ENCODE measurements at regions of chr19 and their contacts with region 1.

Region 1: GRCh38 chr19:31548941-31549340 is 199.7 kb upstream of the TSHZ3 start:
- DNase-seq: peak; percentile 44
- ATAC-seq: peak; percentile 65
- H3K4me3 ChIP-seq: no peak overlapping the region
- H3K27ac ChIP-seq: no peak overlapping the region
- H3K4me1 ChIP-seq: no peaks in the 10 kb centered on the region
- H3K27me3 ChIP-seq: peaks cover 3% of the 10 kb centered on the region; the same call in 1 of the 2 replicates
- CTCF ChIP-seq: peak; percentile 65
- POLR2A ChIP-seq: no peak
- RAD21 ChIP-seq: peak; percentile 72

Region 2: GRCh38 chr19:30682999-30683536 is 865.9 kb before region 1 on chr19:
- CTCF ChIA-PET with region 1: no interaction called
- POLR2A ChIA-PET with region 1: no interaction called
- dilution Hi-C with region 1: no loop called
- in situ Hi-C with region 1: no loop called
- intact Hi-C with region 1: loop called (anchors 1 kb)
- DNase-seq: peak; percentile 82
- ATAC-seq: peak; percentile 97
- H3K4me3 ChIP-seq: no peak overlapping the region
- H3K27ac ChIP-seq: no peak overlapping the region
- H3K4me1 ChIP-seq: no peaks in the 10 kb centered on the region
- H3K27me3 ChIP-seq: peaks cover 11% of the 10 kb centered on the region
- CTCF ChIP-seq: peak; percentile 97
- POLR2A ChIP-seq: no peak; the same call in 1 of the 2 replicates
- RAD21 ChIP-seq: peak; percentile 90

Region 3: GRCh38 chr19:31054430-31054829 is 494.5 kb before region 1 on chr19:
- CTCF ChIA-PET with region 1: no interaction called
- POLR2A ChIA-PET with region 1: no interaction called
- dilution Hi-C with region 1: no loop called
- in situ Hi-C with region 1: no loop called
- intact Hi-C with region 1: loop called (anchors 1 kb)
- DNase-seq: peak; percentile 83
- ATAC-seq: peak; percentile 98
- H3K4me3 ChIP-seq: no peak overlapping the region
- H3K27ac ChIP-seq: no peak overlapping the region
- H3K4me1 ChIP-seq: no peaks in the 10 kb centered on the region
- H3K27me3 ChIP-seq: peaks cover 5% of the 10 kb centered on the region
- CTCF ChIP-seq: peak; percentile 95
- POLR2A ChIP-seq: no peak
- RAD21 ChIP-seq: peak; percentile 97

Region 4: GRCh38 chr19:31110331-31110730 is 438.6 kb before region 1 on chr19:
- CTCF ChIA-PET with region 1: interaction called, 3 read pairs
- POLR2A ChIA-PET with region 1: no interaction called
- dilution Hi-C with region 1: no loop called
- in situ Hi-C with region 1: no loop called
- intact Hi-C with region 1: loop called (anchors 1 kb)
- DNase-seq: peak; percentile 45
- ATAC-seq: peak; percentile 87
- H3K4me3 ChIP-seq: no peak overlapping the region
- H3K27ac ChIP-seq: no peak overlapping the region
- H3K4me1 ChIP-seq: 0 out of 2 replicates have a peak, but pooled peaks cover 2% of the 10 kb centered on the region
- H3K27me3 ChIP-seq: no peaks in the 10 kb centered on the region; the same call in 1 of the 2 replicates
- CTCF ChIP-seq: peak; percentile 59
- POLR2A ChIP-seq: no peak
- RAD21 ChIP-seq: peak; percentile 74

Region 5: GRCh38 chr19:31378404-31378803 is 170.5 kb before region 1 on chr19:
- CTCF ChIA-PET with region 1: no interaction called
- POLR2A ChIA-PET with region 1: no interaction called
- dilution Hi-C with region 1: no loop called
- in situ Hi-C with region 1: no loop called
- intact Hi-C with region 1: loop called (anchors 1 kb)
- DNase-seq: peak; percentile 95
- ATAC-seq: peak; percentile 92
- H3K4me3 ChIP-seq: no peak overlapping the region
- H3K27ac ChIP-seq: peak overlapping the region; percentile 35; the same call in 1 of the 2 replicates
- H3K4me1 ChIP-seq: peaks cover 2% of the 10 kb centered on the region; the same call in 1 of the 2 replicates
- H3K27me3 ChIP-seq: no peaks in the 10 kb centered on the region; the same call in 1 of the 2 replicates
- CTCF ChIP-seq: no peak
- POLR2A ChIP-seq: no peak
- RAD21 ChIP-seq: no peak

Region 6: GRCh38 chr19:31706691-31707620 is 158.0 kb after region 1 on chr19:
- CTCF ChIA-PET with region 1: no interaction called
- POLR2A ChIA-PET with region 1: no interaction called
- dilution Hi-C with region 1: no loop called
- in situ Hi-C with region 1: no loop called
- intact Hi-C with region 1: no loop called
- DNase-seq: no peak
- ATAC-seq: no peak
- H3K4me3 ChIP-seq: no peak overlapping the region
- H3K27ac ChIP-seq: no peak overlapping the region
- H3K4me1 ChIP-seq: no peaks in the 10 kb centered on the region
- H3K27me3 ChIP-seq: no peaks in the 10 kb centered on the region; the same call in 1 of the 2 replicates
- CTCF ChIP-seq: no peak
- POLR2A ChIP-seq: no peak
- RAD21 ChIP-seq: no peak

Measured in IMR-90 (cell line).